ENCODE measurements at regions of chr17 and their contacts with region 1.

Region 1: GRCh38 chr17:59372138-59372857 is 40.8 kb downstream of the YPEL2 start:
- DNase-seq: no peak
- ATAC-seq: no peak
- H3K4me3 ChIP-seq: no peak overlapping the region
- H3K27ac ChIP-seq: no peak overlapping the region
- H3K4me1 ChIP-seq: peaks cover 75% of the 10 kb centered on the region
- H3K27me3 ChIP-seq: no peaks in the 10 kb centered on the region
- CTCF ChIP-seq: no peak
- EP300 ChIP-seq: no peak
- POLR2A ChIP-seq: no peak
- RAD21 ChIP-seq: no peak

Region 2: GRCh38 chr17:59387351-59388068 is 15.2 kb after region 1 on chr17:
- CTCF ChIA-PET with region 1: no interaction called
- POLR2A ChIA-PET with region 1: no interaction called
- in situ Hi-C with region 1: no loop called
- intact Hi-C with region 1: no loop called
- DNase-seq: no peak
- ATAC-seq: no peak
- H3K4me3 ChIP-seq: no peak overlapping the region
- H3K27ac ChIP-seq: no peak overlapping the region
- H3K4me1 ChIP-seq: peaks cover 2% of the 10 kb centered on the region
- H3K27me3 ChIP-seq: no peaks in the 10 kb centered on the region
- CTCF ChIP-seq: no peak
- EP300 ChIP-seq: no peak
- POLR2A ChIP-seq: no peak
- RAD21 ChIP-seq: no peak

Region 3: DNA sequence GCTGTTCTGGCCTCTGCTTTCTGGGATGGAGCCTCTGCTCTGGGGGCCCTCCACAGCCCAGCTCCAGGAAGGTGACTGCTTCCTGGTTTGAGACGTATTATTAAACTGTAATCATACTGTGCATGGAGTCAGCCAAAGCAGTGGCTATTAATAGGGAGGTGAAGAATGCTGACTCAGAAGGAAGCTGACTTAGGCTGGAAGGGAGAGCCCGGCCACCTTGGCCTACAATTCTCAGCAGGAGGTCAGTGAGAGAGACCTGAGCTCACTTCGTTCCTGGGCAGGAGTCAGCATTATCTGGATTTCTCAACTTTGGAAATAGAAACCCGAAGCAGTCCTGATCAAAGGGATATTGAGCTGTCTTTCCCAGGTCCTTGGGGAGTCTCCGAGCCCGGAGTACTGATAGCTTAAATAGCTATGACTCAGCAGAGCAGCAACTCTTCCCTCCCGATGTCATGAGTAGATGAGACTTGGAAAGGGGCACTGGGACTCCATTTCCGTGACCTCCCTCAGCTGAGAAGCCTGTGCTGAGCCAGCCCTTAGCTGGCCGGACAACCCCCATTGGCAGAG is 50.9 kb after region 1 on chr17:
- CTCF ChIA-PET with region 1: no interaction called
- POLR2A ChIA-PET with region 1: interaction called, 4 read pairs
- in situ Hi-C with region 1: loop called (anchors 5 kb)
- intact Hi-C with region 1: loop called (anchors 1 kb)
- DNase-seq: peak; percentile 55
- ATAC-seq: peak; percentile 42
- H3K4me3 ChIP-seq: peak overlapping the region; percentile 36 to 54 (median 39)
- H3K27ac ChIP-seq: no peak overlapping the region
- H3K4me1 ChIP-seq: peaks cover 95% of the 10 kb centered on the region
- H3K27me3 ChIP-seq: peaks cover 0 to 3% of the 10 kb centered on the region in 2 experiments; a peak in 1 of 5 replicates
- CTCF ChIP-seq: no peak
- EP300 ChIP-seq: no peak
- POLR2A ChIP-seq: no peak
- RAD21 ChIP-seq: no peak

Measured in HepG2 (cell line).